HCT116 (cell line): ENCODE measurements at regions of chr6 and their contacts with region 1.

Region 1: DNA sequence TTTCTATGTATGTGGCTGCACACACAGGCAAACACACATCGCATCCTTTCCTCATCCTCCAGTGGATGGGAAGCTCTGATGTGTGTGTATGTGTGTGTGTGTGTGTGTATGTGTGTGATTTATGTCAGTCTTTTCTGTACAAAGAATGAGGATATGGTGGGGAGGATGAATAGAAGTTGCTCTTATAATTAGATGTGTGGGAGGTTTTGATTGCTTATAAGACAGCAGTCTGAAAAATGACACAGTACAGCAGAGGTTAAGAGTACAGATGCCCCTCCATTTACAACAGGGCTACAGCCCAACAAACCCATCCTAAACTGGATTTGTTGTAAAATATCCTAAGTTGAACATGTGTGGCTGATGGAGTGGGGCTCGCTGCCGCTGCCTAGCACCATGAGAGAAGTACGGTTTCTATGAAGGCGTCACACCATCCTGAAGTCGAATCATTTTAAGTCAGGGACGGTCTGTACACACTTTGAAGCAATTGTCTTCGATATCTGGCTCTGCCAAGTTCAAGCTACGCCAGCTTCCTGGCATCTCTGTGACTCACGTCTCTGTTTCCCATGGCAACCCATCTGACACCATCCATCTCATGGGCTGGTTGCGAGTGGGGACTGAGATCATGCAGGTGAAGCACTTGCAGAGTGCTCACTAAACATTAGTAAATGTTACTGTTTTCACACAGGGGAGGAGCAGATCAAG is 252.6 kb downstream of the MYLK4 start:
- DNase-seq: no peak
- ATAC-seq: no peak
- H3K4me3 ChIP-seq: no peak overlapping the region
- H3K27ac ChIP-seq: no peak overlapping the region
- H3K4me1 ChIP-seq: no peaks in the 10 kb centered on the region
- H3K27me3 ChIP-seq: no peaks in the 10 kb centered on the region
- CTCF ChIP-seq: no peak
- POLR2A ChIP-seq: no peak
- RAD21 ChIP-seq: no peak

Region 2: DNA sequence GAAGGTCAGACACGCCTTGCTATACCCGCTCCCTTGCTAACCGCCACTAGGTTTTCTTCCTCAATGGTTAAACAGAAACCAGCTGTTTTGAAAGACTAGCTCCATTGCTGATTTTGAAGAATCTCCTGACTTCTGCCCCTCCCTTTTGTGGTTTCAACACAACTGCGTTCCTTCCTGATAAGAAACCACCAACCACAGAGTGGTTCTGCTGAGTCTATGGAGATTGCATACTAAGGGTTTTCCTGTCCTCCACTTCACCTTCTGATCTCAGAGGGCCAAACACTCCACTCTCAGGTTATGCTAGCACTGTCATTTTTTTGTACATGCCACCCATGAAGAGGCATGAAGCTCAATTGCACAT is 44.8 kb after region 1 on chr6:
- CTCF ChIA-PET with region 1: no interaction called
- POLR2A ChIA-PET with region 1: no interaction called
- RAD21 ChIA-PET with region 1: no interaction called
- intact Hi-C with region 1: loop called (anchors 1 kb)
- DNase-seq: no peak
- ATAC-seq: no peak
- H3K4me3 ChIP-seq: no peak overlapping the region
- H3K27ac ChIP-seq: no peak overlapping the region
- H3K4me1 ChIP-seq: peaks cover 0 to 5% of the 10 kb centered on the region in 2 experiments; a peak in 1 of 4 replicates
- H3K27me3 ChIP-seq: no peaks in the 10 kb centered on the region
- CTCF ChIP-seq: no peak
- POLR2A ChIP-seq: no peak
- RAD21 ChIP-seq: no peak

Region 3: GRCh38 chr6:2598867-2599266 is 100.8 kb after region 1 on chr6:
- CTCF ChIA-PET with region 1: no interaction called
- POLR2A ChIA-PET with region 1: no interaction called
- RAD21 ChIA-PET with region 1: no interaction called
- intact Hi-C with region 1: no loop called
- DNase-seq: no peak
- ATAC-seq: no peak
- H3K4me3 ChIP-seq: no peak overlapping the region
- H3K27ac ChIP-seq: no peak overlapping the region
- H3K4me1 ChIP-seq: no peaks in the 10 kb centered on the region
- H3K27me3 ChIP-seq: no peaks in the 10 kb centered on the region
- CTCF ChIP-seq: peak in 1 of 3 experiments; percentile 18; a peak in 1 of 6 replicates
- POLR2A ChIP-seq: no peak
- RAD21 ChIP-seq: no peak